Adrenal gland (tissue), 19 donors: ENCODE measurements at regions of chr1 and their contacts with region 1.

Region 1: DNA sequence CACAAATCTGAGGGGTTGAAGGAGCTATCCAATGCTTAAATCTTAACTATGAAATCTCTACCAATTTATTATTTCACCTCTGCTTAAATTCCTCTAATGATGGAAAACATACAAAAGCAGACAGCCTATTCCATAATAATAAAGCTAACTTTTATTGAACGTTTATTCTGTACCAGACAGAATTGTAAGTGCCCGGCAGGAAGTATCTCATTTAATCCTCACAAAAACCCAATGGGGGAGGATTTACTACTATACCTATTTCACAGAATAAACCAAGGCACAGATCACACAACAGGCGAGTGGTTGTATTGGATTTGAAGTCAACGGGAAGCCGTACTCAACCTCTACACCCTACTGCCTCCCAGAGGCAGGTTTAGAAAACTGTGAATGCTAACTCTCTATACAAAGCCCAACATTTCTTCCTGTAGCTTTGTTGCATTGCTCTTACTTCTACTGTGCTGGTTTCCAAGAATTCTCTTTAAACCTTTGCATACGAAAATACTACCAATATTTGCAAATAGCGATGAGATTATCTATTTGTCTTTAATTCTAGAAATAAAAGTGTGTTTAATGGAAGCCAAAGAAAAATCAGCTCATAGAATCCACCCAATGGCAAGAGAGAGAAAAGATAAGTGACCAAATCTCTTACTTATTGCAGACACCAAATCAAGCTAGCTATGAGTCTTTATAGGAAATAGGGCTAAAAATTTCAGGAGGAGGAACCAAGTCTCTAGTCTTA is 33.5 kb upstream of the C1orf53 start:
- DNase-seq: peak; percentile 23 to 60 (median 35)
- H3K4me3 ChIP-seq: no peak overlapping the region
- H3K27ac ChIP-seq: no peak overlapping the region
- H3K4me1 ChIP-seq: no peaks in the 10 kb centered on the region
- H3K27me3 ChIP-seq: no peaks in the 10 kb centered on the region
- CTCF ChIP-seq: peak; percentile 32 to 68 (median 65)
- POLR2A ChIP-seq: no peak

Region 2: GRCh38 chr1:197521118-197521739 is 347.7 kb before region 1 on chr1:
- intact Hi-C with region 1: loop called in 1 of 2 experiments (anchors 5 kb)
- DNase-seq: peak in 3 of 7 donors; percentile 16 to 21 (median 19)
- H3K4me3 ChIP-seq: no peak overlapping the region
- H3K27ac ChIP-seq: no peak overlapping the region
- H3K4me1 ChIP-seq: no peaks in the 10 kb centered on the region
- H3K27me3 ChIP-seq: no peaks in the 10 kb centered on the region
- CTCF ChIP-seq: peak; percentile 44 to 66 (median 52)
- POLR2A ChIP-seq: no peak

Region 3: DNA sequence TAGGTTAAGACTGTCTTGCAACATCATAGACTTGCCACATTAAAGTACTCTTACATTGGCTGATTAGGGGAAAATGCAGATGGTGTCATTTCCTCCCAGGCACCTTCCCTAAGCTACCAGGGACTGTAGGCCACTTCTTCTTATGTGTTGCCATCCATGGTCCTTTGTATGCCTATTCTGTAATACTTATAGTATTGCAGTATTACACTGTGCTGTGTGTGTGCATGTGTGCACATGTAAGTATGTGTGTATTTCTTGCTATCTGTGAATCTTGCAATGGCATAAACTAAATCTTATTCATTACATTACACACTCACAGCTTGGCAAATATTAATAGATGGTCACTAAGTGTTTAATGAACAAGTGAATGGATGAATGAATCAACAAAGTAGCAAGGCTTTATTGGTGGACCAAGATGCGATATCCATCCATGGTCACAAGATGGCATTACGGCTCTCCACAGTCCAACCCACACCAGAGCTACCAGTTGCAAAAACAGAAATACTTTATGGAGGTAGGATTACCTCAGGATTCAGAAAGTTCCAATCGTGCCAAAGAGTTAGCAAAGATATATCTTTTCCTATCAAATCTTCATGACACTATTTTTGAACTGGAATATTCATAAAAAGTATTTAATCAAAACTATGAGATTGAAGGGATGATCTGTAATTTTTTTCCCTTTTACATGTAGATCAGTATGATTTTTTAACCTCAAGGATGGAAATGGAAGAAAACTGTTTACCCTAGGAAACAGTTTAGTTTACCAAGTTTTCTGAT is 253.8 kb before region 1 on chr1:
- intact Hi-C with region 1: loop called in 1 of 2 experiments (anchors 5 kb)
- DNase-seq: peak in 6 of 7 donors; percentile 16 to 67 (median 40)
- H3K4me3 ChIP-seq: no peak overlapping the region
- H3K27ac ChIP-seq: no peak overlapping the region
- H3K4me1 ChIP-seq: no peaks in the 10 kb centered on the region
- H3K27me3 ChIP-seq: no peaks in the 10 kb centered on the region
- CTCF ChIP-seq: peak; percentile 28 to 64 (median 58)
- POLR2A ChIP-seq: no peak